ENCODE measurements at regions of chr12 and their contacts with region 1.

Region 1: DNA sequence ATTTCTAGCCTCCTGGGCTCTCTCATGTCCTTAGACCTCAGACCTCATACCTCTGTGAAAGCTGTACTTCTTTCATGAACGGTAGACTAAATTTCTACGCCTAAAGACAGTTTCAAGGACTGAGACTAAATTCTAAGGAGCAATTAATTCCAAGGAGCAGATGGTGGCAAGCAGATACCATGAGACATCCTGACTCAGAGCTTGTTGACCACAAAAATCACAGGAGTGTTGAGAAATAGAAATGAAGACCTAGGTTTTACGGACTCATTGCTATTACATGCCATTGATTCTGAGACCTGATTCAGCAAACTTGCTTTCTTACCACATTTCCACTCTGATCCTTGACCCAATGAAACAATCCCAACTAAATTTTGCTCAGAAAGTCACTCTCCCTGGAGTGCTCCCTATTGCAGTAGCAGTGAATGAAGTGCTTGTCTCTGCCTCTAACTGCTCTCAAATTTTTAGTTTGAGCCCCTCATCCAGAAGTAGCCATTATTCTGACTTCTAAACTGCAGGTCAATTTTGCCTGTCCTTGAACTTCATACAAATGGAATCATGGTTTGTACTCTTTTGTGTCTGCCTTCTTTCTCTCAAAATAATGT is 52.0 kb downstream of the PEX5 start:
- DNase-seq: no peak
- ATAC-seq: no peak
- H3K4me3 ChIP-seq: no peak overlapping the region
- H3K27ac ChIP-seq: no peak overlapping the region
- H3K4me1 ChIP-seq: no peaks in the 10 kb centered on the region
- H3K27me3 ChIP-seq: peaks cover 0 to 4% (median 0%) of the 10 kb centered on the region in 3 donors
- CTCF ChIP-seq: no peak

Region 2: DNA sequence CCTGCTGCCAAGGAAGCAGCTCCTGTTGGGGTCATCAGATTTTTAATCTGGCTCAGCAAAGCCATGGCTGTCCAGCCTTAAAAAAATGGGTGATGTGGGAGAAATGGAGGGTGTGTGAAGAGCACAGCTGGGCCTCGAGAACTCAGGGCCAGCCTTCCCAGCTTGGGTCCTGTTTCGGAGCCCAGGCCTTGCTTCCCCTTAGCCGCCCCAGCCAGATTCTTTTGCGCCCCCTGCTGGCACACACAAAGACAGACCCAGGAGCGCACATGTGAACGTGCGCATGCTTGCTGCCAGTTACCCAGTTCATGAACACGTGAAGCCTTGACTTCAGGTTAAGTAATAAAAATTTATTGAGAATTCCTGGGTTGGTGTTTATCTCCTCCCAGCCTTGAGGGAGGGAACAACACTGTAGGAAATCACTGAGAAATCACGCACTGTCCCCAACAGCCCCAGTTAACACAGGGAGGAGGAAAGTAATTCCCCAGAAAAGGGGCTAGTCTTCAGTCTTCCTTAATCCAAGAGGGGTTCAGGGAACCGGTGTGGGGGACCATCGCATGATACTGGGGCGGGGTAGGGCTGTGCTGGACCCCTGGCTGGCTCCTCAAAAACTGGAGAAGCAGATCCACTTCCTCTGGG is 276.4 kb before region 1 on chr12:
- intact Hi-C with region 1: no loop called
- DNase-seq: peak; percentile 89 to 93
- ATAC-seq: peak; percentile 68 to 83 (median 77)
- H3K4me3 ChIP-seq: no peak overlapping the region
- H3K27ac ChIP-seq: peak overlapping the region; percentile 85
- H3K4me1 ChIP-seq: peaks cover 29% of the 10 kb centered on the region
- H3K27me3 ChIP-seq: no peaks in the 10 kb centered on the region
- CTCF ChIP-seq: peak; percentile 87

Region 3: DNA sequence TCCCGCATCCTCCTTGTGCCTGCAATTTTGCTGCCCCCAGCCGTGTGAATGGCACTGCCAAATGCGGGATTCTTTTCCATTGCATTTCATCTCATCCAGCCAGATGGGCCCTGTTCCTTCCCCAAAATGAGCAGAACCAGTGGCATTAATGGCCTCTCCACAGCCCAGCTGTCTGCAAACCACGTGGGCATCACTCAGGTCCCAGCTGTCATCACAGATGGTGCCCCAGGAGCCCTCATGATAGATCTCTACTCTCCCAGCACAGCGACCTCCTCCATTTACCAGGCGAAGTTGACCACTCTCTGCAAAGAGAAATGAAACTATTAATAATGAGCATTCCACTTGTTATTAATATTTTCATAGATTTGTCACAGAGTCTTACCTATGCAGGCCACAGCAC is 245.0 kb after region 1 on chr12:
- intact Hi-C with region 1: loop called in 1 of 2 experiments (anchors 5 kb)
- DNase-seq: no peak
- ATAC-seq: no peak
- H3K4me3 ChIP-seq: no peak overlapping the region
- H3K27ac ChIP-seq: no peak overlapping the region
- H3K4me1 ChIP-seq: no peaks in the 10 kb centered on the region
- H3K27me3 ChIP-seq: no peaks in the 10 kb centered on the region
- CTCF ChIP-seq: no peak

Measured in psoas muscle (tissue), 8 donors.